AG04449 (cell line): ENCODE measurements at regions of chr12 and their contacts with region 1.

Region 1: DNA sequence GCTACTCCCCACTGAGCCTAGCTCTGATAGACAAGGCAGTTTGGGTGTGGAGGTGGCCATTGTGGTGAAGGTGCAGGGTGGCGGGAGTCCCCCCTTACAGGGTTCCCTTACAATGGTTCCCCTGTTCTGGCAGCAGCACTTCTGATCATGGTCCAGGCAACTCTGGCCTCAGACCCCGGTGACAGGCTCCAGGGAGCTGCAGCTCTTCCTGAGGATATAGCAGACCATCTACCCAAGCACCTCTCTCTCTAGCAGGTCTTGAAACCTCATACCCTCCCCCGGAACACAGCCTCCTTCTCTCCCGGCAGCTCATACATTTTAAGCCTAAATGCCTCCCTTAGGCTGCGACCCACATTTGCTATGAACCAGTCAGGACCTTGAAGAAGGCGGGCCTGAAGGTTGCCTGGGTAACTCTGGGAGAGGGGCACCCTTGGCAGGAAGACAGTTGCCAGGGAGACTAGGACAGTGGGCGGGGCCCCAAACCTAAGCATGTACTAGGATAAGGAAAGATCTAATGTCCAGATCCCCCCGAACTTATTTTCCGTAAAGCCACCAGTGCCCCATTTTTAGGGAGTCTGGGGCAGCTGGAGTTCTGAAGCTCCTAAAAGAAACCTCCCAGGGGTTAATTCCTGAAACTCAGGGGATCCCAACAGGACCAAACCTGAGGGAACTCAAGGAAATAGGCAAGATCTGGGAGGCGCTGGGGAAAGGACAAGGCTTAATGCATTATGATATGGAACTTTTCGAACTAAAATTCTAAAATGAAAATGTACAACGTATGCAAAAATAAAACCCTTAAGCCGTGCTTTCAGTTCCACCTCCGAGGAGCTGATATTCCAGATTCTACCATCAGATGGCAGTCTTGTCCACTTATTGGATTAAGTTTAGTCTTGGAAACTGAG is 4.5 kb upstream of the GDF11 start:
- DNase-seq: no peak
- H3K4me3 ChIP-seq: peak overlapping the region; percentile 78
- CTCF ChIP-seq: peak; percentile 56

Region 2: DNA sequence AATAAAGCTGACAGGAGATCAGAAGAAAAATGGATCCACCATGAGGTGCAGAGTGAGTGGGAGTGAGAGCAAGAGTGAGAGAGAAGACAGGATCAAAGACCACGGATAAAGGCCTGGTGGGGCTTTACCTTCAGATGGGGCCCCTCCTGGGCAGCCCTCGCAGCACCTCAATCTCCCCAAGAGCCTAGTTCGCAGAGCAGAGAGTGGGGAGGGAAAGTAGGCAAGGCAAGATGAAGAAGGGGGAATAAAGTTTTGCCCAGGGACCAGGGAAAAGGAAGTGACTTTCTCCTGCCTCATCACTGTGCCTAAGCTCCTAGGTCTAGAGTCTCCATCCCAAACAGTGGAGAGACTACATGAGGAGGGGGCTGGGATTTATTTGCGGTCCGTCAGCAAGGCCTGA is 91.3 kb before region 1 on chr12:
- CTCF ChIA-PET with region 1: interaction called, 36 read pairs
- POLR2A ChIA-PET with region 1: no interaction called
- DNase-seq: no peak
- H3K4me3 ChIP-seq: no peak overlapping the region
- CTCF ChIP-seq: no peak

Region 3: DNA sequence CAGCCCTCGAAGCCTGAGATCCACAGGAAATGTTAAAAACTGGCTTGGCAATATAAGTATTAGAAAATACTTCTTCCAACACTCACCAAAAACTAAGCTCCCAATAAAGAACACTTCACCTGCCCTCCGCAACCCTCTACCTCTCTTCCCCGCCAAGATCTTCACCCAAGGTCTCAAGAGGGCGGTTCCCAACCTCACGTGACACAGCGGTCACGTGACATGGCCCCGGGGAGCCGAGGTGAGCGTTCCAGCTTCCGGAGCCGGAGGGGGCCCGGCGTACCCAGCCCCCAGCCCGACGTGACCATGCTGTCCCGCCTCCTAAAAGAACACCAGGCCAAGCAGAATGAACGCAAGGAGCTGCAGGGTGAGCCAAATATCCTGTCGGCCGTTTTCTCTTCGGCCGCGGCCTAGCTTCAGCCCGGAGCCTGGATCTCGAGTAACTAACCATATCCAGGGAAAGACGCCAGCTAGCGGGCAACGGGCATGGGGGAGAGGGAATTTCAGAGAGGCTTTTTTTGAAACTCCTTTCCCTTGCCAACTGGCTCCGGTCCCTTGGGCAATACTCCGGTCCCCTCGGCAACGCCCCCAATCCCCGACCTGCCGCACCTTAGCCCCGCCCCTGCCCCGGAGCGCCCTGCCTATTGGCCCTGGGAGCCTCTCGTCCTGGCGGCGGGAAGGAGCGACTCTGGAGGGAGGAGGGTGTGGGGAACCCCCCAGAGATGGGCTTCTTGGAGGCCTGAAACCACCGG is 22.4 kb before region 1 on chr12 and contains the start of gene BLOC1S1:
- CTCF ChIA-PET with region 1: interaction called, 79 read pairs
- POLR2A ChIA-PET with region 1: no interaction called
- DNase-seq: no peak
- H3K4me3 ChIP-seq: peak within 1 kb of the TSS; percentile 81
- CTCF ChIP-seq: no peak

Region 4: GRCh38 chr12:55806982-55807381 is 68.6 kb after region 1 on chr12:
- CTCF ChIA-PET with region 1: interaction called, 16 read pairs
- POLR2A ChIA-PET with region 1: no interaction called
- DNase-seq: no peak
- H3K4me3 ChIP-seq: no peak overlapping the region
- CTCF ChIP-seq: no peak

Region 5: DNA sequence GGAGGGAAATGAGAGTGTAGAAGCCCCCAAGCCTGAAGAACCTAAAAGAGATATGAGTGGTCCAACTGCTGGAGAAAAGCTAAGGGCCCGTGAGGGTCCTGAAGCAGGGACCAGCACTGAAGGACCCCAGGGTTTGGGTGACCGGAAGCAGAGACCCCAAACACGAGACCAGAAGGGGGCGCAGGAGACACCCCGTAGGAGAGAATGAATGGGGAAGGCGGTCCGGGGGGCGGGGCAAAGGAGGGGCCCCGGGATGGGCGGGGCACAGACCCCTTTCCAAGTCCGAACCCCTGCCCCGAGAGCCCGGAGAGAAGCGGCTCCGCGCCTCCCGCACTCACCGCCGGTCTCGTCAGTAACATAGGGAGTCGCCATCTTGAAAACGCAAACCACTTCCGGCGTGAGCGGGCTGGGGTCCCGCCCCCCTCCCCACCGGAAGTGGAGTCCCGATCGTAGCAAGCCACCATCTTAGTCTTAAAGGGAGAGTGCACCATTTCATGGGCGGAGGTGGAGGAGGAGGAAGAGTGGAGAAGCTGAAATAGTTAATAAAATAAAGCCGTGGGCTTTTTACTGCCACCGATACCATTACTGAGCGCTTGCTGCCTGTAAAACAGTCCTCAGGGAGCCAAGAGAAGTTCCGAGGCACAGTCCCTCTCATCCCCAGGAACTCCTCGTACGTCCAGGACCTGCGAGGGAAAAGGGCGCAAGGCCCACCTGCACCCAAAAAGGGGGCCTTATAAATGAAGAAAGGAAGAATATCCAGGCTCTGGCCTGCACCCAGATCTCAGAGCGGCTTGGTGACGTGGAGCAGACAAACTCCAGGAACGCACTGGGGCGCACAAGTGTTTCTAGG is 188.6 kb after region 1 on chr12:
- CTCF ChIA-PET with region 1: interaction called, 36 read pairs
- POLR2A ChIA-PET with region 1: no interaction called
- DNase-seq: peak; percentile 60
- H3K4me3 ChIP-seq: peak overlapping the region; percentile 84
- CTCF ChIP-seq: peak; percentile 80

Region 6: GRCh38 chr12:55973598-55974307 is 235.4 kb after region 1 on chr12 and contains the start of gene RAB5B:
- CTCF ChIA-PET with region 1: interaction called, 22 read pairs
- POLR2A ChIA-PET with region 1: no interaction called
- DNase-seq: peak; percentile 100
- H3K4me3 ChIP-seq: peak within 1 kb of the TSS; percentile 97
- CTCF ChIP-seq: no peak

Region 7: DNA sequence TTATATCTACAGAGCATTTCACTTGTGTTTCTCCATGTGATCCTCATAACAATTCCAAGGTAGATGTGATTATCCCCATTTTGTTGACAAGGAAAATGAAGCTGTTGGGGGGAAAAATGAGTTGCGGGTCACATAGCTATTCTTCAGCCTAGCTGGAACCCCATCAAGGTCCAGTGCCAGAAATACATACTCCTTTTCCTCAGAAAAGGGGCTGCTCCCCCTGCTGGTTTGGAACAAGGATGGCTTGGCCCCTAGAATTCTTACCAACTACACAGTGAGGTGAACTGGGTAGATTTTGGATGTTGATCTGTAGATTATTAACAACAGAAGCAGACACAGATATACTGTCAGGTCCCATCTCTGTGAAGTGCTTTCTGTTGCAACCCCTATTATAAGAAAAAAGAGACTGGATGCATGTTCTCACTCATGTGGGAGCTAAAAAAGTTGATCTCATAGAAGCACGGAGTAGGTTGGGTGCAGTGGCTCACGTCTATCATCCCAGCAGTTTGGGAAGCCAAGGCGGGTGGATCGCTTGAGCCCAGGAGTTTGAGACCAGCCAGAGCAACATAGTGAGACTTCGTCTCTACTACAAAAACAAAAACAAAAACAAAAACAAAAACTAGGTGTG is 291.4 kb after region 1 on chr12:
- CTCF ChIA-PET with region 1: interaction called, 142 read pairs
- POLR2A ChIA-PET with region 1: interaction called, 3 read pairs
- DNase-seq: no peak
- H3K4me3 ChIP-seq: no peak overlapping the region
- CTCF ChIP-seq: peak; percentile 82

Region 8: DNA sequence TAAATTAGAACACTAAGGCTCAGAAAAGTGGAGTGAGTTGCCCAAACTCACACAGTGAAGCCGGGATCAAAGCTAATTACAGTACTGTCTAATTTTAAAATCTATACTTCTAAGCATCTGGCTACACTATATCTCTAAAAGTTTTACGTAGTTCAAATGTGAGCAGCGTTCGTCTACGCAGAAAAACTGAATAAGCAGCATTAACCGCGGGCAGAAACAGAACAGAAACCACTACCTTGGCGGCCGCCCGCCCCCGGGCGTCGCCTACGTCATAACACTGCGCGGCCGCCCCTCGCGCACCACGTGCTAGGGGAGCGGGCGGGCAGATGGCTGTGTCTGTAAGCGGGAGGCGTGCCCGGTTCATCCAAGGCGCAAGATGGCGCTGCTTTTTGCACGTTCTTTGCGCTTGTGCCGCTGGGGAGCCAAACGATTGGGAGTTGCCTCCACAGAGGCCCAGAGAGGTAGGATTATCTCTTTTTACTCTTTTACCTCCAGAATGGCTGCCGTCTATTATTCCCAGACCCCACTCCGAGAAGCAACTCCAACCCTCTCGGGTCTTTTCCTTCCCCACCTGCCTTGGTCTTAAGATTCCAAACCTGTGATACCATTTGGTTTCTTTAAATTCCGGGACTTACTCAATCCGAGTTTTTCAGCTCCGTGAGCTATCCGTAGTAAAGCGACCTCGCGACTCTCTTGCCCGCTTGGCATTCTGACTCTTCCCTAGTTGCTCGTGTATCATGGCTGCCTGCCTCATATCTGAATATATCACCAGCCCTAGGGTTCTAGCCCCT is 730.0 kb after region 1 on chr12 and contains the start of gene SPRYD4:
- CTCF ChIA-PET with region 1: no interaction called
- POLR2A ChIA-PET with region 1: no interaction called
- DNase-seq: peak; percentile 36
- H3K4me3 ChIP-seq: peak within 1 kb of the TSS; percentile 84
- CTCF ChIP-seq: peak; percentile 50